Head of caudate nucleus (tissue), 42 donors: ENCODE measurements at regions of chr4 and their contacts with region 1.

Region 1: GRCh38 chr4:24584175-24584850 is at the start of gene DHX15:
- DNase-seq: peak; percentile 91 to 98 (median 95)

Region 2: DNA sequence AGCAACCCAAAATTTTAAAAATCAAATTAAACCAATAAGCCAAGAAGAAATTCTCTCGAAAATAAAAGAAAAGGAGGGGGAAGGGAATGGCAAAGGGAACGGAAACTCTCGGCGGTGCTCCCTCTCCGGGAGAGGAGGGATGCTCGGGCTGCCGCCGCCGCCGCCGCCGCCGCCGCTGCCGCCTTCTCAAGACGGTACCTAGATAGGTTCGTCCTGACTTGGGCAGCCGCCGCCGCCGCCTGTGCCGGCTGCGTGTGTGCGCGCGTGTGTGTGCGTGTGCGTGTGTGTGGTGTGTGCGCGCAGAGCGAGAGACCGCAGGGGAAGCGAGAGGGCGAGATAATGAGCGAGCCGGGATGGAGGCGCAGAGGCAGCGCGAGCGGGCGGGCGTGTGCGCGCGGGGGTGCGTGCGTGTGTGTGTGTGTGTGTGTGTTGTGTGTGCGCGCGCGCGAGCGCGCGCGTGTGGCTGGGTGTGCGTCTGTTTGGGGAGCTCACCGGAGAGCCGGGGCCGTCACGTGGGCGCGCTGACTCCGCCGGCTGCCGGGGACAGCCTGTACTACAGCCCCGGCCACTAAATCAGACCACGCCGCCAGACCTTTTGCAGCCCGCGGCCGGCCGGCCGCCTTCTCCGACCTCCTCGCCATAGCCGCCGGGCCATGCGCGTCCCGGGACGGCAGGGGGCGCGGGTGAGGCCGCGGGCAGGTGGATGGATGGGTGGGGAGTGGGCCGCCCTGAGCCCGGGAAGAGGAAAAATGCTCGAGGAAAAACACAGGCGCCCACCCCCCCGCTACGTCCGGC is 111.6 kb before region 1 on chr4:
- intact Hi-C with region 1: loop called (anchors 5 kb)
- DNase-seq: peak; percentile 61 to 92 (median 84)